ENCODE measurements at regions of chr1 and their contacts with region 1.

Region 1: DNA sequence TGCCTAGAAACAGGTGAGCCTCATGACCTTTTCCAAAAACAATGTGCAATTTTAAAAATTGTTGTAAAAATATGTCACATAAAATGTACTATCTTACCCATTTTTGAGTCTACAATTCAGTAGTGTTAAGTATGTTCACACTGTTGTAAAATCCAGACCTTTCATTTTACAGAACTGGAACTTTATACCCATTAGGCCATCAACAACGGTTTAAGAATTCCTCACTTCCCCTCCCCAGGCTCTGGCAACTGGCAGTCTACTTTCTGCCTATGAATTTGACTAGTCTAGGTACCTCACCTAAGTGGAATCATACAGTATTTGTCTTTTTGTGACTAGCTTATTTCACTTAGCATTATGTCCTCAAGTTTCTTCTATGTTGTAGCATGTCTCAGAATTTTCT is 8.6 kb downstream of the CTSE start:
- DNase-seq: no peak
- ATAC-seq: no peak
- H3K4me3 ChIP-seq: no peak overlapping the region
- H3K4me3 Mint-ChIP-seq: no peak overlapping the region
- H3K27ac ChIP-seq: no peak overlapping the region
- H3K27ac Mint-ChIP-seq: no peak overlapping the region
- H3K4me1 ChIP-seq: peaks cover 0 to 8% of the 10 kb centered on the region in 2 experiments
- H3K4me1 Mint-ChIP-seq: peaks cover 16 to 27% (median 21%) of the 10 kb centered on the region in 3 donors
- H3K27me3 ChIP-seq: no peaks in the 10 kb centered on the region
- H3K27me3 Mint-ChIP-seq: no peaks in the 10 kb centered on the region

Region 2: GRCh38 chr1:206075786-206076755 is 61.0 kb after region 1 on chr1:
- CTCF ChIA-PET with region 1: interaction called in 1 of 2 experiments, 14 read pairs
- POLR2A ChIA-PET with region 1: no interaction called
- DNase-seq: no peak
- ATAC-seq: no peak
- H3K4me3 ChIP-seq: no peak overlapping the region
- H3K4me3 Mint-ChIP-seq: no peak overlapping the region
- H3K27ac ChIP-seq: no peak overlapping the region
- H3K27ac Mint-ChIP-seq: no peak overlapping the region
- H3K4me1 ChIP-seq: peaks cover 2 to 13% of the 10 kb centered on the region in 2 experiments
- H3K4me1 Mint-ChIP-seq: peaks cover 16 to 17% (median 17%) of the 10 kb centered on the region in 3 donors
- H3K27me3 ChIP-seq: peaks cover 0 to 3% of the 10 kb centered on the region in 2 experiments
- H3K27me3 Mint-ChIP-seq: peaks cover 3 to 8% of the 10 kb centered on the region in 2 donors

Region 3: DNA sequence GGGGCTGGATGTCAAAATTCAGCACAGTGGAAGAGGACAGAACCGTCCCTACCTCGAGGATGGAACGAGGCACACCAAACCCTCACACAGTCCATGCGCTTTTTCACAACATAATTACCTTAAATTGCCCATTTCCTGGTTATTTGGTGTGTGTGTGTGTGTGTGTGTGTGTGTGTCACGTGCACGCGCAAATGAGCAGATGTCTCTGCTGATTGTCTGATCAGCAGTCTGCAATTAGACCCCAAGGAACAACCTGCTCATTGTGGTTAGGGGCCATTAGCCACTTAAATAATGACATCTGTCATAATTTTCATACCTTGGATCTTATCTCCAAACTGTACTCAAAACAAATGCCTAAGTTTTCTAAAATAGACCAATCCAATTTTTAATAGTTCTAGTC is 79.0 kb after region 1 on chr1:
- CTCF ChIA-PET with region 1: no interaction called
- POLR2A ChIA-PET with region 1: no interaction called
- DNase-seq: no peak
- ATAC-seq: no peak
- H3K4me3 ChIP-seq: no peak overlapping the region
- H3K4me3 Mint-ChIP-seq: no peak overlapping the region
- H3K27ac ChIP-seq: no peak overlapping the region
- H3K27ac Mint-ChIP-seq: no peak overlapping the region
- H3K4me1 ChIP-seq: no peaks in the 10 kb centered on the region
- H3K4me1 Mint-ChIP-seq: no peaks in the 10 kb centered on the region
- H3K27me3 ChIP-seq: peaks cover 0 to 22% of the 10 kb centered on the region in 2 experiments
- H3K27me3 Mint-ChIP-seq: peaks cover 15 to 26% of the 10 kb centered on the region in 2 donors